HEK293T (cell line): ENCODE measurements at regions of chr7 and their contacts with region 1.

Region 1: DNA sequence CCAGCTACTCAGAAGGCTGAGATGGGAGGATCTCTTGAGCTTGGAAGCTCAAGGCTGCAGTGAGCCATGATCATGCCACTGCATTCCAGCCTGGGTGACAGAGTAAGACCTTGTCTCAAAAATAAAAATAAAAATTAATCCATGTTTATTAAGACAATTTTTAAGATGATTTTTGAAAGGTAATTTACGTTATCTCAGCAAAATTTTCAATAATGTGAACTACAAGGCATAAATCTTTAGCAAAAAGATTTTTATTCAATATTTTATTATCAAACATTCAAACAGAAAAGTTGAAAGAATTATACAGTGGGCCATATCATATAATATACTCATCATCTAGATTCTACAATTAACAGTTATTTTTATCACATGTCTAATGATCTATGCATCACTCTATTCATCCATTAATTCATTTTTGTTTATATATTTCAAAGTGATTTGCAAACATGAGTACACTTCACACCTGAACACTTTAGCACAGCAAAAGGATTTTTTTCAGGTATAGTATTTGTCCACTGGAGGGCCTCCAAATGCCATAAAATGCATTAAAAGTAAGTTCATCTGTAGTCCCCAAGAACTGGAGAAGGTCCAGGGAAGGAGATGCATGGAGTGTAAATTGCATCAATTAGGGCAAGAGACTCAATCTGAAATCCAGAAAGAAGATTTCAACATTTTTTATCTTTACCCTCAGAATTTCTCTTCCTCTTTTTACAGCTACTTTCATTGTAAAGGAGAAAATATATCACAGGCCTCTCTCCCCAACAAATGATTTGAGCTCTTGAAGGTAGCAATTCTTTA is 38.6 kb upstream of the RSBN1L start:
- DNase-seq: peak; percentile 31

Region 2: GRCh38 chr7:77674878-77675277 is 17.3 kb after region 1 on chr7:
- CTCF ChIA-PET with region 1: no interaction called
- POLR2A ChIA-PET with region 1: no interaction called
- DNase-seq: no peak

Region 3: GRCh38 chr7:77759294-77759889 is 101.8 kb after region 1 on chr7:
- CTCF ChIA-PET with region 1: interaction called, 15 read pairs
- POLR2A ChIA-PET with region 1: no interaction called
- DNase-seq: peak; percentile 39